GM12878 (cell line): ENCODE measurements at regions of chr22 and their contacts with region 1.

Region 1: GRCh38 chr22:42868751-42869251 is 11.7 kb upstream of the ARFGAP3 start:
- DNase-seq: no peak
- ATAC-seq: no peak
- H3K4me3 ChIP-seq: no peak overlapping the region
- H3K27ac ChIP-seq: no peak overlapping the region
- H3K4me1 ChIP-seq: no peaks in the 10 kb centered on the region
- H3K27me3 ChIP-seq: no peaks in the 10 kb centered on the region
- CTCF ChIP-seq: no peak
- EP300 ChIP-seq: no peak
- POLR2A ChIP-seq: peak; percentile 23; the same call in 1 of the 2 replicates
- RAD21 ChIP-seq: no peak

Region 2: GRCh38 chr22:42662114-42663021 is 206.4 kb before region 1 on chr22:
- CTCF ChIA-PET with region 1: interaction called, 14 read pairs
- POLR2A ChIA-PET with region 1: no interaction called
- RAD21 ChIA-PET with region 1: interaction called, 15 read pairs
- SMC1A ChIA-PET with region 1: interaction called, 6 read pairs
- in situ Hi-C with region 1: loop called (anchors 5 kb)
- intact Hi-C with region 1: no loop called
- DNase-seq: no peak
- ATAC-seq: peak; percentile 74
- H3K4me3 ChIP-seq: peak overlapping the region; percentile 62; the same call in 1 of the 2 replicates
- H3K27ac ChIP-seq: peak overlapping the region; percentile 61
- H3K4me1 ChIP-seq: peaks cover 33% of the 10 kb centered on the region
- H3K27me3 ChIP-seq: no peaks in the 10 kb centered on the region
- CTCF ChIP-seq: peak; percentile 78 to 90 (median 85)
- EP300 ChIP-seq: no peak
- POLR2A ChIP-seq: peak; percentile 58
- RAD21 ChIP-seq: peak; percentile 66

Region 3: DNA sequence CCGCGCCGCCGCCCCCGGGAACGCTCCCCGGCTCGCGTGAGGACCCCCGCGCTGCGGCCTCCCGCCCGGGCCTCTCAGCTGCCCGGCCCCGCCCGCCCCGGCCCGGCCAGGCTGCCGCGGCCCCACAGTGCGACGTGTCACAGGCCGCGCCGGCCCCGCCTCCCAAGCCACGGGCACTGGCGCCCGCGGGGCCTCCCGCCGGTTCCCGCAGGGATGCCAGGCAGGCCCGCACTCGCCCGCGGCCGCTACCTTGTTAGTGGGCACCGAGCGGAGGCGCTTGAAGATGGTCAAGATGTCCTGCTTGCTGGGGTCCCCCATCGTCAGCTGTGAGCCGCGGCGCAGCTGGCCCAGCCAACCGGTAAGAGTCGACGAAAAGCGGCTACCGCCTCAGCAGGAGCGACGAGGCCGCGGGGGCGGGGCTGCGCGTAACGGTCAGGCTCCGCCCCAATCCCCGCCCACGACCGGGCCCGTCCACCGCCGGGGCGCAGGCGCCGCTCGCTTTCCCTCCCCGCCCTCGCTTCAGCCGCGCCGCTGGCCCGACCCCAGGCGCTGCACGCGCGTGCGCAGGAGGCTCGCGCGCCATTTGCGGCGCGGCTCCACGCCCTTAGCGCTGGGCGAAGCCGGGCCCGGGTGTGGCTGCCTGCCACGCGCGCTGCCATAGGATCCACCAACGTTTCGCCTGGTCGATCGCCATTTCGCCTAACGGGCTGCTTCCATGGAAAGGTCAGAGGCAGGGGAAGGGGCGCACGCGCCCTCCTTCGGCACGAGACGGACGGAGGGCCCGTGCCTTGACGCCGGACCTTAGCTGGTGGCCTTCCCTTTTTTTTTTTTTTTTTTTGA is 11.7 kb before region 1 on chr22 and contains the start of gene ARFGAP3:
- CTCF ChIA-PET with region 1: interaction called, 18 read pairs
- POLR2A ChIA-PET with region 1: interaction called, 7 read pairs
- RAD21 ChIA-PET with region 1: interaction called, 16 read pairs
- SMC1A ChIA-PET with region 1: interaction called, 5 read pairs
- in situ Hi-C with region 1: no loop called
- intact Hi-C with region 1: no loop called
- DNase-seq: peak; percentile 64
- ATAC-seq: peak; percentile 94
- H3K4me3 ChIP-seq: peak within 1 kb of the TSS; percentile 90
- H3K27ac ChIP-seq: peak within 1 kb of the TSS; percentile 94
- H3K4me1 ChIP-seq: peaks cover 5% of the 10 kb centered on the region
- H3K27me3 ChIP-seq: no peaks in the 10 kb centered on the region
- CTCF ChIP-seq: no peak
- EP300 ChIP-seq: peak in 1 of 2 experiments; percentile 15; a peak in 1 of 4 replicates
- POLR2A ChIP-seq: peak; percentile 89
- RAD21 ChIP-seq: no peak
- polyA plus RNA-seq, gene ARFGAP3: 39.1 to 42.0 TPM

Region 4: DNA sequence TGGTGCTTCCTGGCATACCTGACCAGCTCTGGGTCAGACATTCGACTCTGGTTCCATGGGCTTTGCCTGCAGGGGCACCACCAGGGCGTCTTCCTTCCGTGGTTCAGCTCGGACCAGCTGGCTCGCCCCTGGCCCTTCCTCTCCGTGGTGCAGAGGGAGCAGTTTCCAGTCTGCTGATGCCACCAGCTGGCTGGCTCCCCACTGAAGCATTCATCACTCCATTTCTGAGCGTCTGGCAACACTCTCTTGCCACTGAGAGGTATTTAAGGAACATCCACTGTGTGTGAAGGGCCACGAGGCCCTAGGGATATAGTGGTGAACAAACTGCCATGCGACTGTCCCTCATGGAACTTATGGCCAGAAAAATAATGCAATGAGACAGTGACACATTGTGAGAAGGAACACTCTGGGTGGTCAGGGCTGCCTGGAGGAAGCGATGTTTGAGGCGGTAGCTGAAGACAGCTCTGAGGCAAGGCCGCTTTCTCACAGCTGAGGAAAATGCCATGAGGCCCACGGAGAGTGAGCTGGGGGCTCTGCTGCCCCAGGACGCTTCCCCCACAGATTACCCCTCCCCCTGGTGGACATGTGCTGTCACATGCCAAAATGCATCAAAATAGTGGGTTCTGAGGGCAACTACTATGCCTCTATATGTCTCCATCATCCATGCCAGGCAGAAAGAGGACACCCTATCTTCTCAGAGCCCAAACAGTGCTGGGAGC is 33.1 kb after region 1 on chr22:
- CTCF ChIA-PET with region 1: interaction called, 16 read pairs
- POLR2A ChIA-PET with region 1: no interaction called
- RAD21 ChIA-PET with region 1: interaction called, 5 read pairs
- SMC1A ChIA-PET with region 1: interaction called, 3 read pairs
- in situ Hi-C with region 1: no loop called
- intact Hi-C with region 1: no loop called
- DNase-seq: no peak
- ATAC-seq: peak; percentile 38; the same call in 1 of the 3 replicates
- H3K4me3 ChIP-seq: no peak overlapping the region
- H3K27ac ChIP-seq: no peak overlapping the region
- H3K4me1 ChIP-seq: peaks cover 6% of the 10 kb centered on the region
- H3K27me3 ChIP-seq: no peaks in the 10 kb centered on the region
- CTCF ChIP-seq: peak; percentile 29 to 52 (median 39); a peak in 5 of 6 replicates
- EP300 ChIP-seq: no peak
- POLR2A ChIP-seq: no peak
- RAD21 ChIP-seq: no peak

Region 5: DNA sequence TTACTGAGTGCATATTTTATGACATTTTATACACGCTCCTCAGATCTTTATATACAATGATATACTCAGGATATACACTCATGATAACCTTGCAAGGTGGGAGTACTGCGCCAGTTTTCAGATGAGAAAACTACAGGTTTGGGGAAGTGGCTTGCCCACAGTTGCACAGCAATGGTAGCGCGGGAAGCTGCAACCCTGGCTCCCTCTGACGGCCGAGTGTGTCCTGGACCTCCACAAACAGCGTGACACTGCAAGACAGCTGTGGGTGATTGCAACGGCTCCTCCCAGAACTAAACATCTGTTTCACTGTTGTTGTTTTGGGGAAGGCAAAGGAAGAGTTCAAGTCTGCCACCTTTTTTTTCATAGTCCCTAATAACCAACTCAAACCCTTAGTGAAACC is 99.1 kb after region 1 on chr22:
- CTCF ChIA-PET with region 1: interaction called, 22 read pairs
- POLR2A ChIA-PET with region 1: interaction called, 4 read pairs
- RAD21 ChIA-PET with region 1: interaction called, 38 read pairs
- SMC1A ChIA-PET with region 1: interaction called, 13 read pairs
- in situ Hi-C with region 1: no loop called
- intact Hi-C with region 1: no loop called
- DNase-seq: no peak
- ATAC-seq: peak; percentile 82
- H3K4me3 ChIP-seq: no peak overlapping the region
- H3K27ac ChIP-seq: no peak overlapping the region
- H3K4me1 ChIP-seq: peaks cover 24% of the 10 kb centered on the region
- H3K27me3 ChIP-seq: no peaks in the 10 kb centered on the region
- CTCF ChIP-seq: peak; percentile 48 to 86 (median 61)
- EP300 ChIP-seq: no peak
- POLR2A ChIP-seq: no peak
- RAD21 ChIP-seq: peak; percentile 56

Region 6: DNA sequence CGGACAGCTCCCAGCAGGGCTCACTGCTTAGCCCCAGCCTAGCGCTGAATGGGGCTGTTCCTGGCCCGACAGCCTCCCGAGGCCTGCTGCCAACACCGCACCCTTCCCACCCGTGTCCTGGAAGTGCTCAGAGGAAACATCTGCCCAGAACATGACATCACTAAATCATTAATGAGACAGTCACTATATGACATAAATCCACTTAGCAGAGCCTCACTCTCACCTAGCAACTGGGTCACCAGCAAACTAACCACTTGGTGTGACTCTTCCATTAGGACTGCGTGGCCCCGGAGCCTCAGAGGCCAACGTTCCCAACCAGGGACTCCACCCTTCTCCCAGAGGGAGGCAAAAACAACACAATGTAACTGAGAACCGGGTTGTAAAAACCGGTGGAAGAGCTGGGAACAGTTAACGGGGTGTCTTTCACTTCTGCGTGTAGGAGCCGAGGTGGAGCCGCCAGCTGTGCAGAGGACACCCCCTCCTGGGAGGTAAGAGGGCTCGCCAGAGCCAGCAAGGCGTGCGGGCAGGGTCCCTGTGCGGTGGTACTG is 167.6 kb after region 1 on chr22:
- CTCF ChIA-PET with region 1: interaction called, 58 read pairs
- POLR2A ChIA-PET with region 1: interaction called, 3 read pairs
- RAD21 ChIA-PET with region 1: interaction called, 35 read pairs
- SMC1A ChIA-PET with region 1: interaction called, 16 read pairs
- in situ Hi-C with region 1: no loop called
- intact Hi-C with region 1: loop called (anchors 5 kb)
- DNase-seq: no peak
- ATAC-seq: no peak
- H3K4me3 ChIP-seq: no peak overlapping the region
- H3K27ac ChIP-seq: no peak overlapping the region
- H3K4me1 ChIP-seq: no peaks in the 10 kb centered on the region
- H3K27me3 ChIP-seq: no peaks in the 10 kb centered on the region
- CTCF ChIP-seq: no peak
- EP300 ChIP-seq: no peak
- POLR2A ChIP-seq: no peak
- RAD21 ChIP-seq: no peak